ENCODE measurements at regions of chr9 and their contacts with region 1.

Region 1: DNA sequence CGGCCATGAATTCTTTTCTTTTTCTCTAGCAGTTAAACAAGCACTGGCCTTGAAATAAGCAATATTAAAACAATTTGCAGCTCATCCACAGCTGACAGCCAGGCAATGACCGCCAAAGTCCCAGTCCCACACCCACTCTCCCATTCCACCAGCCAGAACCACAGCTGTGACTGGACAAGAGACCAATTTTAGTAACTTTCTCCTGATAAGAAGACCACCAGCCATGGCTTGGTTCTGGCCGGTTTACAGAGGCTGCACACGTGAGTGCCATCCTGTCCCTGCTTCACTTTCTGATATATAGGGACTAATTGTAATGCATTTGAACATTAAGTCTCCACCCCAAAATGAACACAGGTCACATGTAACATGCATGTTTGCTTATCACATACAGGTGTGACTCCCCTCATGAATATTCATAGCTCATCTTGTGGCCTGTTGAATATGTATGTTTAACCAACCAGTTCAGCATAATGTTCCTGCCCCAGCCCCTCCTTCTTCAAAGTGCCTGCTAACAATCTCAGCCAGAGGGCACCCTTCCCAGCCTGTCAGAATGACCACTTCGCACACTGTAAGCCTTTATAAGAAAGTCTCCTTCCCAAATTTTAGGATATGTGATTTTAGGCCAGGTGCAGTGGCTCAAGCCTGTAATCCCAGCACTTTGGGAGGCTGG is 23.9 kb upstream of the FANCC start:
- DNase-seq: peak in 1 of 3 donors; percentile 53
- ATAC-seq: no peak
- H3K4me3 ChIP-seq: no peak overlapping the region
- H3K27ac ChIP-seq: no peak overlapping the region
- H3K4me1 ChIP-seq: peaks cover 2% of the 10 kb centered on the region
- H3K27me3 ChIP-seq: no peaks in the 10 kb centered on the region

Region 2: DNA sequence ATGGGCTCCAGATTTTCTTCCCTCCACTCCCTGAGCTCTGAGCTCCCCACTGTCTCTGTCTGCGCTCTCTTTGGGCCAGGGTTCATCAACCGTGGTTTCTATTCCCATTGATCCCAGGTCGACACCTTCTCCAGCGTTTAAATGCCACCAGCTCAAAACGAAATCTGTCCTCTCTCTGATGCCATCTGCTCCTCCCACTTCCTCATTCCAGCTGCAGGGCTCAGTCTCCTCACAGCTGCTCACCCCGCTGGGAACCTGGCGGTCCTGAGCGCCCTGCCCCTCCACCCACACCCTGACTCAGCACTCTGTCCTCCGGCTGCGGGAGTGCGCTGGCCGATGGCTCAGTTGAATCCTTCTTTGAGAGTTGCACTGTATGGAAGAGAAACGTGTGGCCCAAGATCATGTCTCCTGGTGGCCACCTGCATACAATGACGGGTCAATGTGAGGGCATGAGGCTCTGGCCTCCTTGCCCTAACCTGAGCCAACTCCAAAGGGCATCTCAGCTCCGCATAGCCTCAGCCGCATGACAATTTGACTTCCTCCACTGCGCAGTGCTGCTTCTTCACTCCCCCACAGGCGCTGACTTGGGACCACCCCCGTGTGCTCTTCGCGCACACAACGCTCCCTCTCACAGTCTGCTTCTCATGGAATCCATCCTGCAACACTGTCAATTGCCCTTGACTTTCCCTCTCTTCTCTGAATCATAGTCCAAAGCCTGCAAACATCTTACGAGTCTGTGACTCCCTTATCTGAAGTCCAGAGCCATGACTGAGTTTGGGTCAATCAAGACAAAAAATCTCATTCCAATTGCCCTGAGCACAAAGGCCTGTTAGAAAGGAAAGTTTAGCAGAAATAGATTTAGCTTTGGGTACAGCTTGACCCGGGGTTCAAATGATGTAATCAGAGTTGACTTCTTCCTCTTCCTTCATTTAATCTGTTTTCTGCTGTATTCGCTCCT is 93.0 kb after region 1 on chr9:
- intact Hi-C with region 1: loop called in 1 of 4 experiments (anchors 10 kb)
- DNase-seq: no peak
- ATAC-seq: no peak
- H3K4me3 ChIP-seq: no peak overlapping the region
- H3K27ac ChIP-seq: no peak overlapping the region
- H3K4me1 ChIP-seq: no peaks in the 10 kb centered on the region
- H3K27me3 ChIP-seq: no peaks in the 10 kb centered on the region

Region 3: GRCh38 chr9:95864852-95865580 is 523.6 kb after region 1 on chr9:
- intact Hi-C with region 1: no loop called
- DNase-seq: no peak
- ATAC-seq: no peak
- H3K4me3 ChIP-seq: no peak overlapping the region
- H3K27ac ChIP-seq: no peak overlapping the region
- H3K4me1 ChIP-seq: no peaks in the 10 kb centered on the region
- H3K27me3 ChIP-seq: no peaks in the 10 kb centered on the region